Dorsolateral prefrontal cortex (tissue), 120 donors: ENCODE measurements at regions of chr5 and their contacts with region 1.

Region 1: DNA sequence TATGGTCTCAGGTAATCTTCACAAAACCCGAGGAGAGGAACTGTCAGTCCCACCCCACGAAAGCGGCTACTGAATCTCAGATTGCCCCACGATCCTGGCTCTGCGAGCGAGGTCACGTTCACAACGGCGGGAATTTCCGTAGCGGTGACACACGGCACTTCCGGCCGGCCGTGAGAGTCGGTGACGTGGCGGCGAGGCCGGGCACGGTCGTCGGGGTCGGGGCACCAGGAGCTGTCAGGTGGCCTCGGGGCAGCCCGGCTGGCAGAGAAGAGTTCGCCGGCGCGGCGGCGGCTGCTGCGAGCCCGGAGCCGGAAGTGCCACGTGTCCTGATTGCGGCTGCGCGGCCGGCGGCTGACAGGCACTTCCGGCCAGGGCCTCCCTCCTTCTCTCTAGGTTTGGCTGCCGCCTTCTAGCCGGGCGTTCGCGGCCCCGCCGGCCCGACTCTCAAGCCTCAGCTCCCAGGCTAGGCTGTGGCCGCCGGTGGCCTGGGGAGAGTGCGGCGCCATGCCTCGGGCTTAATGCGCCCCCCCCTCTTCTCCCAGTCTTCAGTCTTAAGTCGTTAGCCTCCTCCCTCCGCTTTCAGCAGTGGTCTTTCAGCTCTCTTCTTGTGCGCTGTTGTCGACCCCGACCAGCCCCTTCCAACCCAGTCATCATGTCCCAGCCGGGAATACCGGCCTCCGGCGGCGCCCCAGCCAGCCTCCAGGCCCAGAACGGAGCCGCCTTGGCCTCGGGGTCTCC is at the start of gene SEC24A:
- DNase-seq: peak; percentile 68 to 90 (median 81)
- H3K4me3 ChIP-seq: peak within 1 kb of the TSS; percentile 65 to 100 (median 95)
- H3K27ac ChIP-seq: peak within 1 kb of the TSS in 58 of 59 donors; percentile 53 to 97 (median 90)
- H3K27me3 ChIP-seq: no peaks in the 10 kb centered on the region
- CTCF ChIP-seq: peak in 22 of 56 donors; percentile 12 to 55 (median 26)
- total RNA-seq, gene SEC24A: 11.7 to 20.2 (median 15.4) TPM

Region 2: DNA sequence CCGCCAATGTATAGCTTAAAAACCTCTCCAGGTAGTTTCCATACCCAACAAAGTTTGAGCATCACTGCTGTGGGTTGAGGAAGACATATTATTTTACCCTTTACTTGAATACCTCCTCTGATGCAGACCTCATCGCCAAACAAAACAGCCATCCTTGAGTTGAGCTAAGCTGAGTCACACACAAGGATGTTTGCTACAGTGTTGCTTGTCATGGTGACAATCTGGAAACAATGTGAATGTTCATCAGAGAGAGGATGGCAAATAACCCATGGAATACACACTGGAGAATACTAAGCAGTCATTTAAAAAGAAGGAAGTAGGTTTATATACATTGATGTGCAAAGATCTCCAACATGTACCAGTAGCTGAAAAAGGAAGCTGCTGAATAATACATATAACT is 575.2 kb before region 1 on chr5:
- intact Hi-C with region 1: no loop called
- DNase-seq: no peak
- H3K4me3 ChIP-seq: no peak overlapping the region
- H3K27ac ChIP-seq: no peak overlapping the region
- H3K27me3 ChIP-seq: peaks cover 0 to 21% (median 6%) of the 10 kb centered on the region in 45 donors
- CTCF ChIP-seq: no peak

Region 3: GRCh38 chr5:134225618-134226440 is 422.8 kb before region 1 on chr5 and contains the start of gene PPP2CA:
- intact Hi-C with region 1: loop called in 1 of 2 experiments (anchors 5 kb)
- DNase-seq: peak; percentile 96 to 99 (median 98)
- H3K4me3 ChIP-seq: peak within 1 kb of the TSS; percentile 76 to 100 (median 98)
- H3K27ac ChIP-seq: peak within 1 kb of the TSS; percentile 96 to 100 (median 99)
- H3K27me3 ChIP-seq: no peaks in the 10 kb centered on the region
- CTCF ChIP-seq: peak in 26 of 56 donors; percentile 2 to 41 (median 18)
- total RNA-seq, gene PPP2CA: 82.2 to 254 (median 188) TPM

Region 4: GRCh38 chr5:134275822-134276221 is 372.8 kb before region 1 on chr5:
- intact Hi-C with region 1: no loop called
- DNase-seq: no peak
- H3K4me3 ChIP-seq: no peak overlapping the region
- H3K27ac ChIP-seq: no peak overlapping the region
- H3K27me3 ChIP-seq: no peaks in the 10 kb centered on the region
- CTCF ChIP-seq: no peak

Region 5: GRCh38 chr5:134370871-134371833 is 277.4 kb before region 1 on chr5 and contains the start of gene UBE2B:
- intact Hi-C with region 1: loop called in 1 of 2 experiments (anchors 5 kb)
- DNase-seq: peak; percentile 96 to 100 (median 99)
- H3K4me3 ChIP-seq: peak within 1 kb of the TSS; percentile 60 to 100 (median 98)
- H3K27ac ChIP-seq: peak within 1 kb of the TSS; percentile 82 to 100 (median 99)
- H3K27me3 ChIP-seq: no peaks in the 10 kb centered on the region
- CTCF ChIP-seq: peak in 14 of 56 donors; percentile 2 to 35 (median 19)
- total RNA-seq, gene UBE2B: 45.5 to 171 (median 102) TPM

Region 6: GRCh38 chr5:134477462-134478250 is 170.9 kb before region 1 on chr5:
- intact Hi-C with region 1: no loop called
- DNase-seq: no peak
- H3K4me3 ChIP-seq: no peak overlapping the region
- H3K27ac ChIP-seq: no peak overlapping the region
- H3K27me3 ChIP-seq: no peaks in the 10 kb centered on the region
- CTCF ChIP-seq: no peak

Region 7: GRCh38 chr5:134637161-134637582 is 11.4 kb before region 1 on chr5:
- intact Hi-C with region 1: loop called (anchors 2 kb)
- DNase-seq: no peak
- H3K4me3 ChIP-seq: no peak overlapping the region
- H3K27ac ChIP-seq: no peak overlapping the region
- H3K27me3 ChIP-seq: no peaks in the 10 kb centered on the region
- CTCF ChIP-seq: no peak

Region 8: GRCh38 chr5:134758504-134759341 is 110.1 kb after region 1 on chr5 and contains the start of gene DDX46:
- intact Hi-C with region 1: loop called in 1 of 2 experiments (anchors 5 kb)
- DNase-seq: peak; percentile 81 to 96 (median 91)
- H3K4me3 ChIP-seq: peak within 1 kb of the TSS; percentile 68 to 99 (median 90)
- H3K27ac ChIP-seq: peak within 1 kb of the TSS in 51 of 59 donors; percentile 10 to 86 (median 70)
- H3K27me3 ChIP-seq: no peaks in the 10 kb centered on the region
- CTCF ChIP-seq: peak; percentile 77 to 97 (median 89)
- total RNA-seq, gene DDX46: 39.7 to 84.6 (median 56.9) TPM

Region 9: GRCh38 chr5:134904630-134905245 is 256.1 kb after region 1 on chr5 and contains the start of gene PCBD2:
- intact Hi-C with region 1: loop called in 1 of 2 experiments (anchors 10 kb)
- DNase-seq: peak; percentile 76 to 92 (median 84)
- H3K4me3 ChIP-seq: peak within 1 kb of the TSS; percentile 44 to 94 (median 82)
- H3K27ac ChIP-seq: peak within 1 kb of the TSS; percentile 79 to 99 (median 96)
- H3K27me3 ChIP-seq: no peaks in the 10 kb centered on the region
- CTCF ChIP-seq: peak; percentile 43 to 94 (median 80)
- total RNA-seq, gene PCBD2: 5.3 to 19.3 (median 9.8) TPM